ENCODE measurements at regions of chr2 and their contacts with region 1.

Region 1: DNA sequence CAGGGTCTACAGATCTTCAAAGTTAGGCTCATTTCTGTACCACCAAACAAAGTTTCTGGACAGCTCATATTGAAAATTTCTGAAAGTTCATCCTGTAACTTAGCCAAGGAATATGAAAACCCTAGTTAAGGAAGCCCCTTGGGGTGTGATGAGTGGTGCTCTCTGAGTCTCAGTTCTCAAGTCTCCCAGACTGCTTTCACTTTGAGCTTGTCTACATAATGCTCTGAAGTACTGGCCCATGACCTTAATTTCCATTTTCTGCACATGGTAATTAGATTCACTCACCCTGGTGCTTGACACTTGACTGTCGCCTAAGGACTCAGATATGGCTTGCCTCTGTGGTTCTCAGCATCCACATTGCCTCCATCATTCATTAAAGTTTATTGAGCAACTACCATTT is 51.7 kb upstream of the SATB2 start:
- DNase-seq: no peak
- ATAC-seq: no peak
- H3K4me3 ChIP-seq: no peak overlapping the region
- H3K27ac ChIP-seq: no peak overlapping the region
- H3K4me1 ChIP-seq: no peaks in the 10 kb centered on the region
- H3K27me3 ChIP-seq: no peaks in the 10 kb centered on the region
- CTCF ChIP-seq: no peak

Region 2: GRCh38 chr2:199019898-199020507 is 489.4 kb before region 1 on chr2:
- intact Hi-C with region 1: loop called in 1 of 2 experiments (anchors 10 kb)
- DNase-seq: peak in 2 of 4 donors; percentile 13 to 45
- ATAC-seq: peak; percentile 61
- H3K4me3 ChIP-seq: no peak overlapping the region
- H3K27ac ChIP-seq: no peak overlapping the region
- H3K4me1 ChIP-seq: no peaks in the 10 kb centered on the region
- H3K27me3 ChIP-seq: no peaks in the 10 kb centered on the region
- CTCF ChIP-seq: peak; percentile 24 to 29

Region 3: GRCh38 chr2:199100326-199101110 is 408.9 kb before region 1 on chr2:
- intact Hi-C with region 1: no loop called
- DNase-seq: no peak
- ATAC-seq: no peak
- H3K4me3 ChIP-seq: no peak overlapping the region
- H3K27ac ChIP-seq: no peak overlapping the region
- H3K4me1 ChIP-seq: no peaks in the 10 kb centered on the region
- H3K27me3 ChIP-seq: no peaks in the 10 kb centered on the region
- CTCF ChIP-seq: no peak

Region 4: DNA sequence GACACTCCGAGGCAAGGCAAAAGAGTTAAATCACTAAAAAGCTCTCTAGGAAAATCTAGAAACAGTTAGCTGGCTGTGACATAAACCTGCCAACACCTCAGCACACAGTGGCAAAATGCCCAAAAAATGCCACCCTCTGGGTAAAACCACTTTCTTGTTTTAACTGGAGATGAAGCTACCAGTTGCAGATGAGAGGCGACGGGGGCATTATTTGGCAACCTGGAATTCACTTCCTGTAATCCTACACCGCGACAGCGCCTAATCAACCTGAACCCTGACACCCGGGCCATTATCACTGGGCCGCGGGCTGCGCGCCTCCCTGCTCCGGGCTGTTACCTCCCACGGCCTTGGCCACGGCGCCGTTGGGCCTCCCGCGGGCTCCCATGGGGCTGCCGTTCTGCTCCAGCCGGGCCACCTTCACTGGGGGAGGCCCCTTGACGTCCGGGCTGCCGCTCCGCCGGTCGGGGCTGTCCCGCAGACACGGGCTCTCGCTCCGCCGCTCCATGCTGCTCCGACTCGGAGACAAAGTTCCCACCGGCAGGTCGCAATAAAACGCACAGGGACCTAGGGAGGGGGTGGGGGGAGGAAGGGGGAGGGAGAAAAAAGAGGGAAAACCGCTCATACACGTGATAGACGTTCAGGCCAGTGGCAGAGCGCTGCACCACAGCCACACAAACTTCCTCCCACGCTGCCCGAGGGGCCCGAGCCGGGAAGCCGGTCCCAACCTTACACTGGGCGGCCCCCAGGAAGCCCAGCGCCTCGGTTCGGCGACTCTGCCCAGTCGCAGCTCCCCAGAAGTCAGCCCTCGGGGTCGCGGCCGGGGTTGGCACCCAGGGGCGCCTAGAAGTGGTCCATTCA is 53.6 kb before region 1 on chr2:
- intact Hi-C with region 1: no loop called
- DNase-seq: peak in 1 of 4 donors; percentile 79
- ATAC-seq: no peak
- H3K4me3 ChIP-seq: no peak overlapping the region
- H3K27ac ChIP-seq: no peak overlapping the region
- H3K4me1 ChIP-seq: peaks cover 19 to 37% of the 10 kb centered on the region in 2 donors
- H3K27me3 ChIP-seq: peaks cover 58 to 92% of the 10 kb centered on the region in 2 donors
- CTCF ChIP-seq: no peak